GM12878 (cell line): ENCODE measurements at regions of chr6 and their contacts with region 1.

Region 1: GRCh38 chr6:24991810-24992467 is 56.2 kb upstream of the RIPOR2 start:
- DNase-seq: peak; percentile 54
- ATAC-seq: peak; percentile 98
- H3K4me3 ChIP-seq: no peak overlapping the region
- H3K27ac ChIP-seq: no peak overlapping the region
- H3K4me1 ChIP-seq: peaks cover 6% of the 10 kb centered on the region
- H3K27me3 ChIP-seq: no peaks in the 10 kb centered on the region
- CTCF ChIP-seq: peak; percentile 77 to 81 (median 79)
- EP300 ChIP-seq: no peak
- POLR2A ChIP-seq: no peak
- RAD21 ChIP-seq: peak; percentile 99

Region 2: DNA sequence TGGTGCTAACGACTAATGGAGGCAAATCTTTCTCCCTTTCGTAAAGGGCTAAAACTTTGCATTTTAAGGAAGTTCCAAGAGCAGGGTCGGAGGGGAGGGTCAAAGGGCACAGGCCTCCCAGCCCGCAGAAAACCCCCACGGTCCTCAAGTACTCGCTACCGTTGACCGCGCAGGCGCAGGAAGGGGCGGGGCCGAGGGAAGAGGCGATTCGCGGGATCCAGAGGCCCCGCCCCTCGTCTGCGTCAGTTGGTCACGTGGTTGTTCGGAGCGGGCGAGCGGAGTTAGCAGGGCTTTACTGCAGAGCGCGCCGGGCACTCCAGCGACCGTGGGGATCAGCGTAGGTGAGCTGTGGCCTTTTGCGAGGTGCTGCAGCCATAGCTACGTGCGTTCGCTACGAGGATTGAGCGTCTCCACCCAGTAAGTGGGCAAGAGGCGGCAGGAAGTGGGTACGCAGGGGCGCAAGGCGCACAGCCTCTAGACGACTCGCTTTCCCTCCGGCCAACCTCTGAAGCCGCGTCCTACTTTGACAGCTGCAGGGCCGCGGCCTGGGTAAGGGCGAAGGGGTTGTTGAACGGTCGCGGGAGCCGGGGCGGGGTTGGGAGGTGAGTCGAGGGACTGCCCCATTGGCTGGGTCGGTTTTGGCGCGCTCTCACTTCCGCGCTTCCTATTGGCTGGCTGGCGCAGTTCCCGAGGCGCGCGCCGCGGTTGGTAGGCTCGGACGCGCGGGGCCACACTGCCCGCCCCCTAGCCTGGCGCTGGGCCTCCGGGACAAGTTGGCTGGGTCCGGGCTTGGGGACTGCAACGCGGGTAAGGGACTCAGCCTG is 217.0 kb before region 1 on chr6 and contains the start of gene GMNN:
- CTCF ChIA-PET with region 1: interaction called, 7 read pairs
- POLR2A ChIA-PET with region 1: no interaction called
- RAD21 ChIA-PET with region 1: interaction called, 3 read pairs
- SMC1A ChIA-PET with region 1: interaction called, 11 read pairs
- in situ Hi-C with region 1: no loop called
- intact Hi-C with region 1: no loop called
- DNase-seq: peak; percentile 78
- ATAC-seq: peak; percentile 94
- H3K4me3 ChIP-seq: peak within 1 kb of the TSS; percentile 79
- H3K27ac ChIP-seq: peak within 1 kb of the TSS; percentile 87
- H3K4me1 ChIP-seq: peaks cover 3% of the 10 kb centered on the region; the same call in 1 of the 2 replicates
- H3K27me3 ChIP-seq: no peaks in the 10 kb centered on the region
- CTCF ChIP-seq: no peak
- EP300 ChIP-seq: no peak
- POLR2A ChIP-seq: peak; percentile 96
- RAD21 ChIP-seq: no peak
- polyA plus RNA-seq, gene GMNN: 146 to 153 TPM

Region 3: DNA sequence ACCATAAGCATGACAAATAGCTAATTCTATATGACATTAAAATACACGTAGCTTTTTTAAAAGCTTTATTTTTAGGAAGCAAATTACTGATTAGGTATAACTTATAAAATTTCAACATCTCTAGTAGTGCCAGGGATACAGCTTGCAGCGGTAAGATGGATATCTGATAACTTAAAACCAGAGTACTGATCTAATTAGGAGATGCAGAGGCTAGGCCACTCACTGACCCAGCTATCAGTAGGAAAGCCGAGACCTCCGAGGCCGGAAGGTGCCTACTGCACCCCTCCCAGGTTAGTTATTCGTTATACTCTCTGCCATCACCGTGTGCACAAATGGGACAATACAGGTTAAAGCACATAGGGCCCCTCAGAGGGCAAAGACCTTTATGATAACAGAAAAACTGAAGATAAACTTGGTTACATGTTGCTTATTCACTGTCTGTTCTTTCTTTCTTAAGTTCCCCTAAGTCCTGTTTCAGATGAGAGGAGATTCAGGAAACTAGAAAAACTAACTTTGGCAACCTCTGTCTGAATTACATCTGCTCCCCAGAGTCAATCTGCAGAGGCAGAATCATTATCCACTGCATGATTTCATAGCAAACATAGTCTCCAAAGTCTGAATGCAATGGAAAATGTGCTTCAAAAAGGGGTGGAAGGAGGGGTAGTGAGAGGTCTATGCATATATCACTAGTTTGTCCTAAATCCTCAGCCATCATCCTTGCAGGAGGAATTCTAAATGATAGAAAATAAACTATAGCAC is 117.0 kb before region 1 on chr6:
- CTCF ChIA-PET with region 1: interaction called, 38 read pairs
- POLR2A ChIA-PET with region 1: no interaction called
- RAD21 ChIA-PET with region 1: interaction called, 8 read pairs
- SMC1A ChIA-PET with region 1: interaction called, 8 read pairs
- in situ Hi-C with region 1: no loop called
- intact Hi-C with region 1: no loop called
- DNase-seq: no peak
- ATAC-seq: no peak
- H3K4me3 ChIP-seq: no peak overlapping the region
- H3K27ac ChIP-seq: no peak overlapping the region
- H3K4me1 ChIP-seq: no peaks in the 10 kb centered on the region
- H3K27me3 ChIP-seq: no peaks in the 10 kb centered on the region
- CTCF ChIP-seq: no peak
- EP300 ChIP-seq: no peak
- POLR2A ChIP-seq: no peak
- RAD21 ChIP-seq: no peak

Region 4: GRCh38 chr6:24910961-24911712 is 80.8 kb before region 1 on chr6:
- CTCF ChIA-PET with region 1: interaction called, 90 read pairs
- POLR2A ChIA-PET with region 1: interaction called, 17 read pairs
- RAD21 ChIA-PET with region 1: interaction called, 80 read pairs
- SMC1A ChIA-PET with region 1: interaction called, 93 read pairs
- in situ Hi-C with region 1: no loop called
- intact Hi-C with region 1: loop called (anchors 5 kb)
- DNase-seq: no peak
- ATAC-seq: peak; percentile 47
- H3K4me3 ChIP-seq: peak overlapping the region; percentile 86
- H3K27ac ChIP-seq: peak overlapping the region; percentile 60
- H3K4me1 ChIP-seq: peaks cover 26% of the 10 kb centered on the region
- H3K27me3 ChIP-seq: no peaks in the 10 kb centered on the region
- CTCF ChIP-seq: no peak
- EP300 ChIP-seq: no peak
- POLR2A ChIP-seq: no peak; the same call in 1 of the 2 replicates
- RAD21 ChIP-seq: no peak

Region 5: GRCh38 chr6:24949020-24949569 is 42.8 kb before region 1 on chr6:
- CTCF ChIA-PET with region 1: interaction called, 19 read pairs
- POLR2A ChIA-PET with region 1: no interaction called
- RAD21 ChIA-PET with region 1: interaction called, 38 read pairs
- SMC1A ChIA-PET with region 1: interaction called, 62 read pairs
- in situ Hi-C with region 1: no loop called
- intact Hi-C with region 1: no loop called
- DNase-seq: peak; percentile 96
- ATAC-seq: peak; percentile 96
- H3K4me3 ChIP-seq: peak overlapping the region; percentile 28; the same call in 1 of the 2 replicates
- H3K27ac ChIP-seq: peak overlapping the region; percentile 84
- H3K4me1 ChIP-seq: peaks cover 46% of the 10 kb centered on the region
- H3K27me3 ChIP-seq: no peaks in the 10 kb centered on the region
- CTCF ChIP-seq: no peak
- EP300 ChIP-seq: peak; percentile 78 to 85; a peak in 2 of 4 replicates
- POLR2A ChIP-seq: no peak
- RAD21 ChIP-seq: peak; percentile 9; the same call in 1 of the 2 replicates

Region 6: DNA sequence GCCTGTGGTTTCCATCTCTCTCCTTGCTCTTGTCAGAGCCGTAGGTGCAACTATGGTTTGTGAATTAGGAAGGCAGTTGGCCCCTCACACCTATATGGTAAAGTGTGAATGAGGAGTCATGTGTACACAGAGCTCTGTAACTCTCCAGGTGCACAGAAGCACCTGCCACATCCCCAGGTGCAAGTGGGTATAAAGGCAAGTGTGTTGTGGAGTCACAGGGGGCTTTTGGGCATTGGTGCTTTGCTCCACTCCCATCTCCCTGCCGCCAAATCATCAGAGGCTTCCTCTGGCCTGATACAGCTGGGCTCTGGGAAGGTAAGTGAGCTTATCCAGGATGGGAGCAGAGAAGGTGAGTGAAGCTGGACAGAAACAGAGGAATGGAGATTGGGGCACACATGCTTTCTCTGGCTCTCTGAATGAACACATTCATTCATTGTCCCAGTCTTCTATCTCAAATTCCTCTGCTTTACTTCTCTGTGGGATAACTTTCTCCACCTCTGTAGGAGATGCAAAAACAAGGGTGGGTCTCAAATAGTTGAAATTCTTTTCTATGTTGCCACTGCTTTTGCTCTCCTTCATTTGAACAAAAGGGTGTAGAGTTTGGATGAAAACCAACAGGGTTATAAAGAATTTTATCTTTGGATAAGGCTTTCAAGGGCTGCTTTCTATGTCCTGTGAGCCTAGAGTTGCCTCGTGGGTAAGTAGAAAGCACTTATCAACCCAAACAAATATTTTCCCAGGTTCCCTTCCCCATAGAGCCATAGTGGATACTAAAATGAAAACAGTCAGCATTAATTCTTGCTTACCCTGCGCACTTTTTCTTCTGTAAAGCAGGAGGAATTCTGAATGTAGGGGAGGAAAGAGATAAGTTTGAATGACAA is 11.2 kb before region 1 on chr6:
- CTCF ChIA-PET with region 1: interaction called, 31 read pairs
- POLR2A ChIA-PET with region 1: interaction called, 3 read pairs
- RAD21 ChIA-PET with region 1: interaction called, 30 read pairs
- SMC1A ChIA-PET with region 1: interaction called, 25 read pairs
- in situ Hi-C with region 1: no loop called
- intact Hi-C with region 1: no loop called
- DNase-seq: no peak
- ATAC-seq: no peak
- H3K4me3 ChIP-seq: no peak overlapping the region
- H3K27ac ChIP-seq: no peak overlapping the region
- H3K4me1 ChIP-seq: no peaks in the 10 kb centered on the region
- H3K27me3 ChIP-seq: no peaks in the 10 kb centered on the region
- CTCF ChIP-seq: no peak
- EP300 ChIP-seq: no peak
- POLR2A ChIP-seq: no peak
- RAD21 ChIP-seq: no peak

Region 7: DNA sequence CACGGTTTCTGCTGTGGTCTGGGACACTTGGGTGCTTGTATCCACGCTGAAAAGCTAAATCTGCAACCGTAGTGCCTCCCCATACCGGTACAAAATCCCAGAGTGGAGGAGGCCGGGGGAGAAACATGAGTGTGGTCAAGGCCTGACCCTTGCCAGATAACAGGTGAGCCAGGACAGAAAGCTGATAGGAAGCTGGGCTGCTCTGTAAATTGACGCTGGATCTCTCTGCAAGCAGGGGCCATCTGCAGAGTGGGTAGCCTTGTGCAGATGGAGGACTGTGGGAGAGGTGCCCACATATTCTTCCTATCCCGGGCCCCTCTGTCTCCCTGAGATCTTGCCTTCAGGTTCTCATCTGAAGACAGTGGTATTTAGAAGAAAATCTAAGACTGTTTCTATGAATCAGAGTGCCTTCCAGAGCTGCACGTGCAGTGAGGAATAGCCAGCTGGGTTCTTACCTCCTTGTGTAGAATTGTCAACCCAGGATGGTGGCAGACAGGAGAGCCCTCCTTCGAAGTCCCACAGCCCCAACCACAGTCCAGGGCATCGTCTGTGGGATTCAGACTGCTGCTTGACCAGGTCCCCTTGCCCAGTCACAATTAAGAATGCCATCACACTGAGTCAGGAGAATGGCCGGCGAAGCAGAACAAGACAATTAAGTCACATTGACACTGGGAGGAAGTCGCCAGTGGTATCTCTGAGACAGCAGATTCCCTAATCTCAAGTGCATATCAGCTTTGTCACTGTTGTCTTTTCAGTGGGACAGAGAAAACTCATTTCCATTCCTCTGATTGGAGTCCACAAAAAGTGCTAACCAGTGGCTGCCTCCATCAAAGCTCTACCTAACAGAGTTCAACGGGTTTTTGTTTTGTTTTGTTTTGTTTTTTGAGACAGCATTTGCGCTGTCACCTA is 43.8 kb after region 1 on chr6:
- CTCF ChIA-PET with region 1: interaction called, 17 read pairs
- POLR2A ChIA-PET with region 1: no interaction called
- RAD21 ChIA-PET with region 1: interaction called, 3 read pairs
- SMC1A ChIA-PET with region 1: interaction called, 11 read pairs
- in situ Hi-C with region 1: no loop called
- intact Hi-C with region 1: no loop called
- DNase-seq: no peak
- ATAC-seq: peak; percentile 71
- H3K4me3 ChIP-seq: peak overlapping the region; percentile 52; the same call in 1 of the 2 replicates
- H3K27ac ChIP-seq: peak overlapping the region; percentile 80
- H3K4me1 ChIP-seq: peaks cover 19% of the 10 kb centered on the region
- H3K27me3 ChIP-seq: no peaks in the 10 kb centered on the region
- CTCF ChIP-seq: no peak
- EP300 ChIP-seq: no peak
- POLR2A ChIP-seq: no peak
- RAD21 ChIP-seq: no peak

Region 8: GRCh38 chr6:25166955-25167748 is 175.2 kb after region 1 on chr6:
- CTCF ChIA-PET with region 1: no interaction called
- POLR2A ChIA-PET with region 1: no interaction called
- RAD21 ChIA-PET with region 1: no interaction called
- SMC1A ChIA-PET with region 1: no interaction called
- in situ Hi-C with region 1: no loop called
- intact Hi-C with region 1: no loop called
- DNase-seq: no peak
- ATAC-seq: no peak
- H3K4me3 ChIP-seq: no peak overlapping the region
- H3K27ac ChIP-seq: no peak overlapping the region
- H3K4me1 ChIP-seq: no peaks in the 10 kb centered on the region
- H3K27me3 ChIP-seq: no peaks in the 10 kb centered on the region
- CTCF ChIP-seq: no peak
- EP300 ChIP-seq: no peak
- POLR2A ChIP-seq: no peak
- RAD21 ChIP-seq: no peak

Region 9: GRCh38 chr6:25202505-25202904 is 210.6 kb after region 1 on chr6:
- CTCF ChIA-PET with region 1: no interaction called
- POLR2A ChIA-PET with region 1: no interaction called
- RAD21 ChIA-PET with region 1: no interaction called
- SMC1A ChIA-PET with region 1: no interaction called
- in situ Hi-C with region 1: no loop called
- intact Hi-C with region 1: no loop called
- DNase-seq: no peak
- ATAC-seq: no peak
- H3K4me3 ChIP-seq: no peak overlapping the region
- H3K27ac ChIP-seq: no peak overlapping the region
- H3K4me1 ChIP-seq: no peaks in the 10 kb centered on the region
- H3K27me3 ChIP-seq: no peaks in the 10 kb centered on the region; a peak in 1 of 4 replicates
- CTCF ChIP-seq: no peak
- EP300 ChIP-seq: no peak
- POLR2A ChIP-seq: no peak
- RAD21 ChIP-seq: no peak